Naive thymus-derived CD4-positive, alpha-beta T cell (primary cell): ENCODE measurements at regions of chr1 and their contacts with region 1.

Region 1: DNA sequence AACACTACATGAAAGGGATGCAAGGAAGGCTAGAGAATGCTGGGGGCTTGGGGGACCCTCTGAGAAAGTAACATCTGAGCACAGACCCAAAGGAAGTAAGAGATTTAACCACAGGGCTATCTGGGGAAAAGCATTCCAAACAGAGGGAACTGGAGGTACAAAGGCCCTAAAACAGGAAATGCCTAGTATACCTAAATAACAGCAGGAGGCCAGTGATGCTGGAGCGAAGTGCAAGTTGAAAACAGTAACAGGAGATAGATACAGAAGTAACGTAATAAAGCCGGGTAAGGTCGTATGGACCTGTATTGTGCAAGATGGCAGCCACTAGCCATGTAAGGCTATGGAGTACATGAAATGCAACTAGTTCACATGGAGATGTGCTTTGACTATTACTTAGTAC is 52.1 kb downstream of the CD34 start:
- DNase-seq: no peak
- ATAC-seq: no peak
- H3K4me3 ChIP-seq: no peak overlapping the region
- H3K4me3 Mint-ChIP-seq: no peak overlapping the region
- H3K27ac ChIP-seq: no peak overlapping the region
- H3K27ac Mint-ChIP-seq: no peak overlapping the region
- H3K4me1 ChIP-seq: peaks cover 56 to 70% of the 10 kb centered on the region in 2 donors
- H3K4me1 Mint-ChIP-seq: peaks cover 31 to 62% (median 52%) of the 10 kb centered on the region in 7 donors
- H3K27me3 ChIP-seq: no peaks in the 10 kb centered on the region
- H3K27me3 Mint-ChIP-seq: no peaks in the 10 kb centered on the region

Region 2: DNA sequence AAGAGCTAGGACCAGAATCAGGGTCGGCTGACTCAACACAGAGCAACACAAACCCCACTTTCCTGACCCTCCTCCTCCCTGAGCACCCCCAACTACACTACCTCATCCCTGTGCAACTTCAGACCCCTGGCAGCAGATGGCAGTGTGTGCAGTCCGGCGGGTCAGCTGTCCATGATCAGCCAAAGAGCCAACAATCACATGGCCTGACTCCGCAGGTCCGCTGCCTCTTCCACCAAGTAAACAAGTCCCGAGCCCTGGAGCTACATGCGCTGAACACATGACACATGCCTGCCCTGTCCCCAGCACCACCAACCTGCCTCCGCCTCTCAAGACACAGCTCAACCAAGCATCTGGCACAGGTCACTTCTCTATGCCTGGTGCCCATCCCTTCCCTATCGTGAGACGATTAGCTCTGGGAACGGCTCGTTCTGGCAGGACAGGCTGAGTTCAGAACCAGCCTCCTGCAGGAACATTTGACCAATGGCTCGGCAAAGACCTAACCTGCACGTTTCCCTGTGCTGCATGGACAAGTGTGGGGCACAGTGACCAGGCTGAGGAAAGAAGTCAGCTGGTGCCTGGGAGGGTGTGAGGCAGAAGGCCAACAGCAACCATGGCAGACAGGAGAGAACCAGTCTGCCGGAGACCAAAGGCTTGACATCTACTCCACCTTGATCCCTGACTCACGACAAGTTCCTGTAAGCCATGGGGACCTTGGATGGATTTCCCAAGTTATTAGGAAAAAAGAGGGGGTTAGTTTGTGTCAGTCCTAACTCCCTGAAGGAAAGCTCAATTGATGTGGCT is 46.7 kb before region 1 on chr1:
- CTCF ChIA-PET with region 1: no interaction called
- POLR2A ChIA-PET with region 1: interaction called, 3 read pairs
- intact Hi-C with region 1: loop called in 1 of 2 experiments (anchors 1 kb)
- DNase-seq: peak in 1 of 9 donors; percentile 20
- ATAC-seq: peak; percentile 34
- H3K4me3 ChIP-seq: no peak overlapping the region
- H3K4me3 Mint-ChIP-seq: peak overlapping the region in 1 of 10 donors; percentile 49
- H3K27ac ChIP-seq: no peak overlapping the region
- H3K27ac Mint-ChIP-seq: peak overlapping the region in 7 of 9 donors; percentile 29 to 91 (median 72)
- H3K4me1 ChIP-seq: peaks cover 13 to 28% of the 10 kb centered on the region in 2 donors
- H3K4me1 Mint-ChIP-seq: peaks cover 56 to 94% (median 91%) of the 10 kb centered on the region in 7 donors
- H3K27me3 ChIP-seq: no peaks in the 10 kb centered on the region
- H3K27me3 Mint-ChIP-seq: no peaks in the 10 kb centered on the region

Region 3: DNA sequence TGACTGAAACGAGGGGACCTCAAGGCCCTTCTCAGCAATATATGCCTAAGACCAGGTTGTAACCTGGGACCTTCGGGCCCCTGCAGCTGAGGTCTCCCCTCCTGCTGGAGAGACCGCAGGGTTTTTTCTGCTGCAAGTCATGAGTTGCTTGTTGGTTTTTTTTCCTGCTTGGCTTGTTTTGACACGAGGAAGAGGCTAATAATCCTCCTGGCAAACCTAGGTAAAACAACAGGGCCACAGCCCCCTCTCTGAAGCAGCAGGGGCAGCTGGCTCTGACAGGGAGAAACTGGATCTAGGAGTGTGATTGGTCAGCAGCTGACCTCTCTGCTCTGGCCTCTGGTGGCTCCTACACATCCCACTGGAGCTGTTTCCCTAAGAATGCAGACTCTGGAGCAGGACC is 16.9 kb before region 1 on chr1:
- CTCF ChIA-PET with region 1: interaction called, 3 read pairs
- POLR2A ChIA-PET with region 1: interaction called, 547 read pairs
- intact Hi-C with region 1: loop called (anchors 2 kb)
- DNase-seq: no peak
- ATAC-seq: no peak
- H3K4me3 ChIP-seq: no peak overlapping the region
- H3K4me3 Mint-ChIP-seq: peak overlapping the region in 1 of 10 donors; percentile 3
- H3K27ac ChIP-seq: no peak overlapping the region
- H3K27ac Mint-ChIP-seq: peak overlapping the region in 5 of 9 donors; percentile 28 to 57 (median 56)
- H3K4me1 ChIP-seq: peaks cover 0 to 57% of the 10 kb centered on the region in 2 donors
- H3K4me1 Mint-ChIP-seq: peaks cover 57 to 97% (median 87%) of the 10 kb centered on the region in 7 donors
- H3K27me3 ChIP-seq: no peaks in the 10 kb centered on the region
- H3K27me3 Mint-ChIP-seq: no peaks in the 10 kb centered on the region

Region 4: DNA sequence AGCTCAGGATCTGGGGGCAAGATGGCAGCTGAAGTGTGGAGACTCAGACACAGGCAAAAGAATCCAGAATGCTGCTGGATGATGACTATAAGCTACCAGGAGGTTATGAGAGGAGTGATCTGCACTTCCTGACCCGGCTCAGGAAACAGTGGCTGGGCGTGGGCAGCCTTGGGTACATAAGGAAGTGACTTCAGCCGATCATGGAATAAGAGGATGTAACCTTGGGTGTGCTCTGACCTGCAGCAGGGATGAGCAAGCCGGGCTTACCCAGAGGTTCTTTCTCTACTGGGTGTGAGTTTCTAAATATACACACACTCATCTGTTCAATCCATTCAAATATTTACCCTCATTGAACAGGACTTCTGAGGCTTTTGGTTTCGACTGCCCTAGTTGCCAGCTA is 10.6 kb before region 1 on chr1:
- CTCF ChIA-PET with region 1: interaction called, 3 read pairs
- POLR2A ChIA-PET with region 1: interaction called, 3 read pairs
- intact Hi-C with region 1: loop called (anchors 1 to 2 kb)
- DNase-seq: peak in 1 of 9 donors; percentile 55
- ATAC-seq: peak; percentile 86
- H3K4me3 ChIP-seq: no peak overlapping the region
- H3K4me3 Mint-ChIP-seq: peak overlapping the region; percentile 39 to 84 (median 62)
- H3K27ac ChIP-seq: peak overlapping the region; percentile 27
- H3K27ac Mint-ChIP-seq: peak overlapping the region in 8 of 9 donors; percentile 5 to 88 (median 66)
- H3K4me1 ChIP-seq: peaks cover 43 to 69% of the 10 kb centered on the region in 2 donors
- H3K4me1 Mint-ChIP-seq: peaks cover 72 to 97% (median 92%) of the 10 kb centered on the region in 7 donors
- H3K27me3 ChIP-seq: no peaks in the 10 kb centered on the region
- H3K27me3 Mint-ChIP-seq: no peaks in the 10 kb centered on the region